Activated B cell treated with CpG ODN at 0.5 μM for 24 hours (primary cell): ENCODE measurements at regions of chr18 and their contacts with region 1.

Region 1: DNA sequence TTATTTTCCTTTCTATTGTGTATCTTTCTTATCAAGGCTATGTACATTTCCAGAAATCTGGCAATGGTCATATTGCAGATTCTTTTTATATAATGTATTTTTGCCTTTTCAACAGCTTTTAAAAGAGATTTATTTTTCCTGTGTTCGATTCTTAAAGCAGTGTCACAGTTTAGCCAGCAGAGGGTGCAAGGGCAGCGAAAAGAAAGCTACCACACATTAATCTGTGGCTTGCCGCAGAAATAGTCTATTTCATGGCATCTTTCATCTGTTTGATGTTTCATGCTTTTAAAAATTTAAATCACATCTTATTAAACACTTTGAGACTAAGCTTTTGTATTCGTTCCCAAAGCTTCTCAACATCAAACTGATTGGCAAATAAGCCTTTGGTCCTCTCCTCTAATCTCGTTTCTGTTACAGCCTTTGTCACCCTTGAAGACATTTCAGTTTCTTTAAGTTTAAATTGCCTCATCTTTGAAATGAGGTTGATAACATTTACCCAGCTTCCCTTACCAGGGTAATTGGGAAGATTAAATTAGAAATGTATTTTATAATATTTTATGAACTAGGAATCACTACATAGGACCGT is 73.3 kb downstream of the PIK3C3 start:
- DNase-seq: no peak
- ATAC-seq: peak; percentile 40
- H3K4me3 Mint-ChIP-seq: no peak overlapping the region
- H3K27ac Mint-ChIP-seq: no peak overlapping the region
- H3K4me1 Mint-ChIP-seq: no peaks in the 10 kb centered on the region
- H3K27me3 Mint-ChIP-seq: no peaks in the 10 kb centered on the region
- CTCF ChIP-seq: peak; percentile 75

Region 2: DNA sequence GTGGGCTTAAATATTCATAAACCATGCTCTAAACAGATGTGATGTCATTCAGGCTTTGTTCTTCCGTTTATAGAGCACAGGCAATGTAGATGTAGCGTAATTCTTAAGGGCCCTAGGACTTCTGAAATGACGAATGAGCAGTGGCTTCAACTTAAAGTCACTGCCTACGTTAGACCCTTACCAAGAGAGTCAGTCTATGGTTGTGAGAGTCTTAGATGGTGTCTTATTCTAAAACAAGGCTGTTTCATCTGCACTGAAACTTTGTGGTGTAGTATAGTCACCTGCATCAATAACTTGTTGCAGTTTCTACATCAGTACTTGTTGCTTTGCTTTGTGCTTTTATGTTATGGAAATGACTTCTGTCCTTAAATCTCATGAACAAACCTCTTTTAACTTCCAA is 17.3 kb before region 1 on chr18:
- CTCF ChIA-PET with region 1: interaction called, 10 read pairs
- POLR2A ChIA-PET with region 1: no interaction called
- intact Hi-C with region 1: no loop called
- DNase-seq: no peak
- ATAC-seq: no peak
- H3K4me3 Mint-ChIP-seq: no peak overlapping the region
- H3K27ac Mint-ChIP-seq: no peak overlapping the region
- H3K4me1 Mint-ChIP-seq: no peaks in the 10 kb centered on the region
- H3K27me3 Mint-ChIP-seq: no peaks in the 10 kb centered on the region
- CTCF ChIP-seq: no peak

Region 3: DNA sequence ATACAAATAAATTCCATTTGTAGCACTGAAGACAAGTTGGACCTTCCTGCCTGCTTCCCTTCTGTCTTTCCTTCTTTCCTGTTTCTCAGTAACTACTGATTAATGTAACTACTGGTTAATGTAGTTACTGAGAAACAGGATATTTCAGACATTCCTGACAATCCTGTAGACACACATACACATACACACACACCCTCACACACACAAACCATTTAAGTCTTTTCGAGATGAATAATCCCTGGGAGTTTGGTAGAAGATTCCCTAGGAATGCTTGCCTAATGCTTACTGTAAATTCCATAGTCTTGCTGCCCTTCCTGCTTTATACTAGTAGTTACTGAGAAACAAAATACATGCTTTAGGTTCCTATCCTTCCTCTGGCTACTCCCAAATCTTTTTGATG is 10.6 kb after region 1 on chr18:
- CTCF ChIA-PET with region 1: interaction called, 16 read pairs
- POLR2A ChIA-PET with region 1: no interaction called
- intact Hi-C with region 1: no loop called
- DNase-seq: no peak
- ATAC-seq: no peak
- H3K4me3 Mint-ChIP-seq: no peak overlapping the region
- H3K27ac Mint-ChIP-seq: no peak overlapping the region
- H3K4me1 Mint-ChIP-seq: no peaks in the 10 kb centered on the region
- H3K27me3 Mint-ChIP-seq: no peaks in the 10 kb centered on the region
- CTCF ChIP-seq: no peak

Region 4: GRCh38 chr18:42053188-42053781 is 24.9 kb after region 1 on chr18:
- CTCF ChIA-PET with region 1: interaction called, 22 read pairs
- POLR2A ChIA-PET with region 1: interaction called, 3 read pairs
- intact Hi-C with region 1: no loop called
- DNase-seq: no peak
- ATAC-seq: peak; percentile 50
- H3K4me3 Mint-ChIP-seq: no peak overlapping the region
- H3K27ac Mint-ChIP-seq: no peak overlapping the region
- H3K4me1 Mint-ChIP-seq: peaks cover 8% of the 10 kb centered on the region
- H3K27me3 Mint-ChIP-seq: no peaks in the 10 kb centered on the region
- CTCF ChIP-seq: peak; percentile 42

Region 5: DNA sequence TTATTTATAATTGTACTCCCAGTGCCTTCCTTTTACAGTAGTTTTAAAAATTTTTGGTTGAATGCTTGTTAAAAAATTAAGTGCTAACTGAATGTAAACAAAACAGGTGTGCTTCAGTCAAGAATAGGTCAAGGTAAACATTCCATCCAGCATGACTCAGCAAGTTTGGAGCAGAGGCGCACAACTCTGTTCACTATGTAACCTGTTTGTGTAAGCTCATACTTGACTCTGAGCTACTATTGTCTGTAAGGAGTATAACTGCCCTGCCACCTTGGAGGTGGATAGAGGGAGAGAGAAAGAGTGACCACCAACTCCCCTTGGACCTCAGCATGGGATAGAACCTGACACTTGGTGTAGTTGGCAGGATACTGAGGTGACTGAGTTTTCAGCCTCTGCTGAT is 1456.4 kb after region 1 on chr18:
- CTCF ChIA-PET with region 1: no interaction called
- POLR2A ChIA-PET with region 1: no interaction called
- intact Hi-C with region 1: loop called (anchors 5 kb)
- DNase-seq: no peak
- ATAC-seq: no peak
- H3K4me3 Mint-ChIP-seq: no peak overlapping the region
- H3K27ac Mint-ChIP-seq: no peak overlapping the region
- H3K4me1 Mint-ChIP-seq: no peaks in the 10 kb centered on the region
- H3K27me3 Mint-ChIP-seq: no peaks in the 10 kb centered on the region
- CTCF ChIP-seq: no peak